Right ventricle myocardium inferior (tissue), 1 donor: ENCODE measurements at regions of chr4 and their contacts with region 1.

Region 1: GRCh38 chr4:85968945-85969819 is 390.7 kb downstream of the MAPK10 start:
- DNase-seq: no peak
- ATAC-seq: no peak

Region 2: DNA sequence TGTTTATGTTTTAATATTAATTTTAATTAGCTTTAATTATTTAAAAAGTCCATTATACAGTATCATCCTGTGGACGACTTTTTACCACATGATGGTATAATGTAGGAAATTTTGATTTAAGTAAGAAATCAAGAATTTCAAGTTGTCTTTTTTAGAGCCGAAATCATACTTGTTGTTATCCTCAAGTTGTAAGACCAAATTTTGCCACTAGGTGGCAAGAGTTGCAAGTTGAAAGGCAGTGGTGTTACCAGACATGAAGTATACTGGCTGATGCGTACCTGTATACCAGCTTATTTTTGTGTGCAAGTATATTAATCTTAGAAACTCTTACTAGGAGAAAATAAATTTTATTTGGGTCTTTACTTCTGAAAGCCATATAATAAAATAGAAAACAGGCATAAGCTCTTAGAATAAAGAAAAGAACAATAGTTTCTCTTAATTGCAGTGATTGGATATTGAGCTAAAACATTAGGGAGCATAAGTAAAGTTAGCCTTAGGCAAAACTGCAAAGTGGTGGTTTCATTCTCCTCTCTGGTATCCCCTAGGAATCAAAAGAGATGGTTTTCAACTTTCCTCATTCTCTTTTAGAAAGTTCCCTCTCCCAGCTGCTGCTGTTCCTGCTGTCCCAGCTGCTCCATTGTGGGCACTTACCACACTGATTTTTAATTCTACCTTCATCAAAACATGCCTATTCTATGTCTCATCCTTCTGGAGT is 884.6 kb before region 1 on chr4:
- intact Hi-C with region 1: loop called (anchors 5 kb)
- DNase-seq: no peak
- ATAC-seq: no peak

Region 3: DNA sequence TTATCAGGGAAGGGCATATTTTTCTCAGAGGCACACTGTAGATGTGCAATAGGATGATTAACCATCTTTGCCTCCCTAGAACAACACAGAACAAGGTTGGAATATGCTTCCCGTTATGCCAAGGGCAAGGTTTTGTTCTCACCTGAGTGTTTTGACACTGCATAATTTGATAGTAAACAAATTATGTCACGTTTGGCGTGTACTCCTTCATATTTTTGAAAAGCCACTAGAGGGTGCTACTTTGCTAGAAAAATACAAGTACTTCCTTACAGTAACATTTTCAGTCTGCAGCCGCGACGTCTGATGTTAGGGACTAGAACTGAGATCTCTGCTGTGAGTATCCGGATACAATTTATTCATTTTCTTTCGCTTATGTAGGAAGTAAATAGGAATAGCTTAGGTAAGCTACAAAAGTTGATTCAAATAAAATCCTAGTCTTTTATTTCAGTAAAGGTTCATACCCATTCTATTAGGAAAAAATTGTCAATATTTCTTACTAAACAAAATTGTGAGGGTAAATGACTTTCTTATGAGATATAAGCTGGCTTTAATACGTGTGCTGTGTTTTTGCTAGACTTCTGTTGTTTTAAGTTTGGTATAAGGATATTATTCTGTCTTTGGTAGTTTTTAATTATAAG is 821.6 kb before region 1 on chr4:
- intact Hi-C with region 1: loop called (anchors 5 kb)
- DNase-seq: peak; percentile 84
- ATAC-seq: peak; percentile 74

Region 4: DNA sequence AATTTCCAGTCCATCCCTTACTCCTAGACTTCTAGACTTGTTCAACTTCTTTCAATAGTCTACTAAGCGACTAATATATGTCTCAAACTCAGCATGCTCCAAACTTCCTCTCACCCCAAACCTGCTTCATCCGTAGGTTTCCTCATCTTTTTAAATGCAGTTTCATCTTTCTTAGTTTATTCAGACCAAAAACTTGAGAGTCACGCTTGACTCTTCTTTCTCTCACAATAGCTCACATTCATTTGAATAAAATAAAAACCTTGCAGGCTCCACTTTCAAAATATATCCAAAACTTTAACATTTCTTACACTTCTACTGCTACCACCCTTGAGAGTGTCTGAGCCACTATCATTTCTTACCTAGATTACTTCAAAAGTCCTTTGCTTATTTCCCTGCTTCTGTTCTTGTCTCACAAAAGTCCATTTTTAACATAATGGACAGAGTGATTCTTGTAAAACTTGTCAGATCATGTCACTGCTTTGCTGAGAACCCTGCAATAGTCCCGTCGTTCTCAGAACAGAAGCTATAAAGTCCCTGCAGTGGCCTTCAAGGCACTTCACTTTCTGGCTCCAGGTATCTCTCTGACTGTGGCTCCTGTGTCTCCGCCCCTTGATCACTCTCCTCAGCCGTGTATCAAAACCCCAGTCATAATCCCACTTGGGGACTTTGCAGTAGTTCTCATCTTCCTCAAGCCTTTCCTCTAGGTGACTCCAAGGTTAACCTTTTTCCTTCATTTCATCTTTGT is 326.7 kb before region 1 on chr4:
- intact Hi-C with region 1: no loop called
- DNase-seq: no peak
- ATAC-seq: no peak

Region 5: DNA sequence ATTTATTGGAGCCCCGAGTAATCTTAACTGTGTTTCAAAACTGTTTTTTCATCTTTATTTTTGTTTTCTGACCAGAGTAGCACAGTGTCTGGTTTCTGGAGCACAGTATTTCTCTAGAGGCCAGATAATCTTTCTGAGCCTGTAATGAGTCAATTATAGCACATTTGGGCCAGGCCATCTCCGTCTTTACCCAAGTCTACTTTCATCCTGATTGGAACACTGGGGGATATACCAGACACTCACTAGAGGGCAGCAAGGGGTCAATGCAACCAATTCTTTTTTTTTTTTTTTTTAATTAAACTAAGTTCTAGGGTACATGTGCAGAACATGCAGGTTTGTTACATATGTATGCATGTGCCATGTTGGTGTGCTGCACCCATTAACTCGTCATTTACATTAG is 212.2 kb before region 1 on chr4:
- intact Hi-C with region 1: loop called (anchors 5 kb)
- DNase-seq: no peak
- ATAC-seq: peak; percentile 84

Region 6: DNA sequence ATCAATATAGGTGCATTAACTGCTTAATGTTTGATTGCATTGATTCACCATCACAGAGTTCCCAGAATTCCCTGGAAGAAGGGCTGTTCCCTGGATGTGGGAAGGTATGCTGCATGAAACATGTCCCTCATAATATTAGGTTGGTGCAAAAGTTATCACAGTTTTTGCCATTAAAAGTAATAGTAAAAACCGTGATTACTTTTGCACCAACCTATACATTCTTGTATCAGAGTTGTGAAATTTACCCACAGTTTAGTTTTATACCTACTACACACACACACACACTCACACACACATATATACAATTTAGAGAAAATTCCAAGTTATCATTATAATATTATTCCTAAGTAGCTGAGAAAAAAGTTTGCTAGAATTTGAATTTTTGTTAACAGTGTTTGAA is 173.2 kb before region 1 on chr4:
- intact Hi-C with region 1: loop called (anchors 2 kb)
- DNase-seq: no peak
- ATAC-seq: no peak

Region 7: DNA sequence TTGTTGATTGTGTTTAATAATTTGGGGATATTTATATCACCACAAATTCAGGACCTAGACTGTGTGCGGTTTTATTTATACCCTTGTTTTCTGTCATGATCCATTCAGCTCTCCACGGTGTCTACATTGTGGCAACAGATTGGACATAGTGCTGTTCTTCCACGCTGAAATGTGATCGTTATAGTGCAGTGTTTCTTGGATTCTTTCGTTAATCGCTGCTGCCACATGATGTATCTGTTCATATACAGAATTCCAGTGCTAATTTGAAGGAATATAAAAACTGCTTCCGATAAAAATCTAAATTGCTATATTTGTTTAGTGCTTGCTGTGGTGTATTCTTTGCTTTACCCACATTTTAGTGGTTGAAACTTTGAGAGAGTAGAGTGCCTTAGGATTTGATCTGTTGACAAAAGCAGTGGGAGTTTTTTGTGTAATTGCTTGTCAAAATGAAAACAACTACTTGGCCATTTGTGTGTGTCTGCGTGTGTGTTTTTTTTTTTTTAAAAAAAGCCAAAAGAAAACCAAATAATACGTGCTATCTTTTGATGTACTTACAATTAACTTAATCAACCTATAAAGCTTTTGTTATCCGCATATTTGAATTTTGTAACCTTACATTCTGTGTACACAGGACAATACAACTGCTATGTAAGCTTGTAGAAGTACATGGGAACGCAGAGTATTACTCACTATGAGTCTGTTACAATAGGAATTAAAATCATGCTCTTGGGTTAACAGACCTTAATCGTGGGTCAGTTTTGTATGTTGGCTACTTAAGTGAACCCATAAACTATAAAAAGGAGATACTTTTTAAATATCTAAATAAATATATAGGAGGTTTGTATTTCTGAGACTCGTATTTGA is 140.9 kb before region 1 on chr4:
- intact Hi-C with region 1: no loop called
- DNase-seq: no peak
- ATAC-seq: peak; percentile 70

Region 8: DNA sequence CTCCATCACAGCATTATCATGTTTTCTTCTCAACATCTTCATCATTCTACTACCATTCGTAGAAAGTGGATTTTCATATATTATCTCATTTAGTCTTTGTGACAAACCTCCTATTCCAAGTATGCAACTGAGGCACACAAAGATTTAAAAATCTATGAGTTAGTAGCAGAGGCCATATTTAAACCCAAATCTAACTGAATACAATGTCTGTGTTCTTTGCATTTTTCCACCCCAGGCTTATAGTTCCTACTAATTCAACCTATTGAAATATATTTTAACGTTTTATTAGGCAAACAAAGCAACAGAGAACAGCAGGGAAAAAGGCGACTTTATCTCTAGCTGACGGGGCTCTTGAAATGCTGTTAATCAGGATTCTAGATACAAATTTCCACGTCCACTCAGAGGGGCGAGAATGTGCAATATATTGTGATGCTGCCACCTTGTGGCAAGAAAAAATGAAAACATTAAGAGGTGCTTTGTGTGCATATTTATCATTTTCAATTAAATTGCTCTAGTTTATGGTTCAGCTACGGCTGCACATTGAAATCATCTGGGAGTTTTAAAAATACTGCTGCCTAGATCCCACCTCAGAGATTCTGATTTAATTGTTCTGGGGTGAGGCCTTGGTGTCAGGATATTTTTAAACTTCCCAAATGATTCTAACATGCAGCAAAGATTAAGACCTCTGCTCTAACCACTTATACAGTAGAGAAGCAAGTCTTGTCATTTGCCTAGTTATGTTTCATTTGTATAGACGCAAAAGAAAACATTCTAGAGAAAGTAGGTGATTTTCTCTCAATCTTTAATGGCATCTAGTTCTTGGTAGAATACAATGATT is 74.8 kb after region 1 on chr4:
- intact Hi-C with region 1: loop called (anchors 5 kb)
- DNase-seq: no peak
- ATAC-seq: no peak